Lower leg skin (tissue), 4 donors: ENCODE measurements at regions of chr5 and their contacts with region 1.

Region 1: DNA sequence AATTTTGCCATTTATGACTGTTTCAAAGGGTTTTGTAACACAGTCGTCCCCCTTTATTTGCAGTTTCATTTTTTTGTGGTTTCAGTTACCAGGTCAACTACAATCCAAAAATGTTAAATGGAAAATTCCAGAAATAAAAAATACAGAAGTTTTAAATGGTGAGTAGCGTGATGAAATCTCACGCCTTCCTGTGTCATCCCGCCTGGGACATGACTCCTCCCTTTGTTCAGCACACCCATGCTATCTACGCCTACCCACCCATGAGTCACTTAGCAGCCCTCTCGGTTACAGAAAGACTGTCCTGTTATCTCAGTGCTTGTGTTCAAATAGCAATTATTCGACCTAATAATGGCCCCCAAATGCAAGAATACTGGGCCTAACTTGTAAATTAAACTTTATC is 765.3 kb upstream of the ADAMTS16 start:
- DNase-seq: peak; percentile 59 to 89
- H3K4me3 ChIP-seq: no peak overlapping the region
- CTCF ChIP-seq: no peak
- POLR2A ChIP-seq: no peak

Region 2: GRCh38 chr5:2906302-2907090 is 1468.4 kb before region 1 on chr5:
- intact Hi-C with region 1: loop called (anchors 5 kb)
- DNase-seq: peak; percentile 7 to 64
- H3K4me3 ChIP-seq: no peak overlapping the region
- CTCF ChIP-seq: no peak
- POLR2A ChIP-seq: no peak

Region 3: GRCh38 chr5:4275232-4275631 is 99.6 kb before region 1 on chr5:
- intact Hi-C with region 1: no loop called
- DNase-seq: no peak
- H3K4me3 ChIP-seq: no peak overlapping the region
- CTCF ChIP-seq: no peak
- POLR2A ChIP-seq: no peak